ENCODE measurements at regions of chr7 and their contacts with region 1.

Region 1: DNA sequence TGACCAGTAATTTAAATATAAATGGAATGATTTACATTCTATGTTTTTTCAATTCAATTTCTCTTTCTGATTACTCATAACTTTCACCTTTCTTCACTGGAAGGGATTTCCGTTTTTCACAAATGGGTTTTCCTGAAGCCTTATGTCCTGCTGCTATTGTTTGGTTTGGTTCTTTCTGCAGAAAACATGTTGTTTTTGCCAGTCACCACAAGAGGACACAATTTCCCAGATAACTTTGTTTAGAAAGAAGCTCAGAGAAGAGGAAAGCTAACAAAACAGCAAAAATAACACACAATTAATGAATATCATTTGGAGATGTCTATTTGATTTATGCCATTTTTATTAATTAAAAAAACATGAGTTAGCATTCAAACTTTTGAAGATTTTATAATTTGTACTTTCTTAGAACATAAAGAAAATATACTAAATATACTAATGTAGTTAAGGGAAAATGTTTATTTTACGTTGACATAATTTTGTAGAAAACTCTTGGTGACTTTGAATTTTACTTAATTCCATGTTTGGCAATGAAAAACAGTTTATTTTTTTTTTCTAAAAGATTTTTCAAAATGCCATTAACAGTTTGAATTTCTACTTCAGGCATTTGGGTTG is 4.6 kb upstream of the TWIST1 start:
- DNase-seq: no peak
- H3K4me3 ChIP-seq: no peak overlapping the region
- H3K27ac ChIP-seq: no peak overlapping the region
- H3K4me1 ChIP-seq: no peaks in the 10 kb centered on the region
- H3K27me3 ChIP-seq: no peaks in the 10 kb centered on the region
- CTCF ChIP-seq: peak; percentile 85

Region 2: DNA sequence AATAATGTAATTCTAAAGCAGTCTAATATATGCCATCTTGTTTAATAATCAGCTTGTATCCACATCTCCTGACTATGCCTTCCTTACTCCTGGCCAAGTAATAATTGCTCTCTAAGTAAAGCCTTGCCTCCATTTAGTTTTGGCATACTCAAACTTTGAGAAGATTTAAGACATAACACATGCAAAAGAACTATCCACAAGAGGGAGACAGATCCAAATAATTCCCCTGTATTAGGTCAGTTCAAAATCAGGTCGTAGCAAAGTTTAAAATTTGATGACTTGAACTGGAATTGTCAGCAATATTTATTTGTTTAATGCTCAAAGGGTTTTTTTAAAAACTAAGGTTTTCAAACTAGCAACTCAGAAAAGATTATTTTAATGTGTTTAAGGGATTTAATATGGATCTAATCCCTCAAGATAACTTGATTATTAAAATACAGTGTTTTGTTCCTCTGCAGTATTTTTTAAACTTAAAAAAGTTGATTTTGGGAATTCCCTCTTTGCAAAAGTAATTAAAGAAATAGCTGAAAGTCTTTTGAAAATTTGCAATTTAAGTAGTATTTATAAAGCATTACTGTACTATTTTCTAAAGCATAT is 531.2 kb before region 1 on chr7:
- CTCF ChIA-PET with region 1: interaction called, 4 read pairs
- POLR2A ChIA-PET with region 1: no interaction called
- intact Hi-C with region 1: loop called (anchors 10 kb)
- DNase-seq: peak in 1 of 2 experiments; percentile 53
- H3K4me3 ChIP-seq: no peak overlapping the region
- H3K27ac ChIP-seq: no peak overlapping the region
- H3K4me1 ChIP-seq: peaks cover 7% of the 10 kb centered on the region
- H3K27me3 ChIP-seq: no peaks in the 10 kb centered on the region
- CTCF ChIP-seq: peak; percentile 86

Region 3: GRCh38 chr7:18886832-18887231 is 235.3 kb before region 1 on chr7:
- CTCF ChIA-PET with region 1: no interaction called
- POLR2A ChIA-PET with region 1: no interaction called
- intact Hi-C with region 1: no loop called
- DNase-seq: no peak
- H3K4me3 ChIP-seq: no peak overlapping the region
- H3K27ac ChIP-seq: no peak overlapping the region
- H3K4me1 ChIP-seq: no peaks in the 10 kb centered on the region
- H3K27me3 ChIP-seq: no peaks in the 10 kb centered on the region
- CTCF ChIP-seq: no peak

Region 4: GRCh38 chr7:19107356-19108146 is 14.5 kb before region 1 on chr7:
- CTCF ChIA-PET with region 1: no interaction called
- POLR2A ChIA-PET with region 1: no interaction called
- intact Hi-C with region 1: no loop called
- DNase-seq: no peak
- H3K4me3 ChIP-seq: no peak overlapping the region
- H3K27ac ChIP-seq: no peak overlapping the region
- H3K4me1 ChIP-seq: no peaks in the 10 kb centered on the region
- H3K27me3 ChIP-seq: no peaks in the 10 kb centered on the region; the same call in 1 of the 2 replicates
- CTCF ChIP-seq: no peak

Region 5: GRCh38 chr7:19362099-19362498 is 240.0 kb after region 1 on chr7:
- CTCF ChIA-PET with region 1: no interaction called
- POLR2A ChIA-PET with region 1: no interaction called
- intact Hi-C with region 1: no loop called
- DNase-seq: no peak
- H3K4me3 ChIP-seq: no peak overlapping the region
- H3K27ac ChIP-seq: no peak overlapping the region
- H3K4me1 ChIP-seq: no peaks in the 10 kb centered on the region
- H3K27me3 ChIP-seq: no peaks in the 10 kb centered on the region
- CTCF ChIP-seq: no peak

Region 6: DNA sequence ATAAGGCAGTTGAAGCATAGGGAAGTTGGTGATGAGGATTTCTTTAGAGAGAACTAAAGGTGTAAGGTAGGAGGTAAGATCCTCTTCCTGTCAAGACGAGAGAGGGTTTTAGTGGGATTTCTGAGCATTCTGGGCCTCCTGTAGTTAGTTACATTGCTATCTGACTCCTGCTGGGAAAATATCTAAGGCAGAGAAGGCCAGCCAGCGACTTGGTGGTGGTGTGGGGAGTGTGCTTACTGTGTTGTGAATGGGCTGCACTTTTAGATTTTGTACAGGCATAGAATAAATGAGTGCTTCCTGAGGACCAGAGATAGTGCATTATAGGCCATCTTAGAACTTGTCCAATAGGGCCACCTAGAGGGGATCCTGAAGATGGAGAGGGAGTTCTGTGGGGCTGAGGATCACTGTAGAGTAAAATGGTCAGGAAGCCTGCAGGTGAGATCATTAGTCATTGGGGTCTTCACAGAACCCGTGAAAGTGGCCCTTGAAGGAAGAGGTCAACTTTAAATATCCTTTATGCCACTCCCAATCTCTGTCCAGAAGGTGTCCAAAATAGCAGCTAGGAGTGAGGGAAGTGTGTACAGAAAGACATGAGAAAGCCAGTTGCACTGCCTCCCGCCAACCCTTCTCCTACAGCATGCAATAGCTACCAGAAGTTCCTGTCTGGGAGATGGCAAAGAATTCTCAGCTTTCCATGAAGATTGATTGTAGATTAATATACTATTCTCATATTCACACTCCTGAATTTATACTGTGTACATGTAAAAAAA is 320.1 kb after region 1 on chr7:
- CTCF ChIA-PET with region 1: no interaction called
- POLR2A ChIA-PET with region 1: no interaction called
- intact Hi-C with region 1: loop called (anchors 2 kb)
- DNase-seq: peak in 1 of 2 experiments; percentile 18
- H3K4me3 ChIP-seq: no peak overlapping the region
- H3K27ac ChIP-seq: no peak overlapping the region
- H3K4me1 ChIP-seq: no peaks in the 10 kb centered on the region
- H3K27me3 ChIP-seq: no peaks in the 10 kb centered on the region
- CTCF ChIP-seq: peak; percentile 61

Region 7: DNA sequence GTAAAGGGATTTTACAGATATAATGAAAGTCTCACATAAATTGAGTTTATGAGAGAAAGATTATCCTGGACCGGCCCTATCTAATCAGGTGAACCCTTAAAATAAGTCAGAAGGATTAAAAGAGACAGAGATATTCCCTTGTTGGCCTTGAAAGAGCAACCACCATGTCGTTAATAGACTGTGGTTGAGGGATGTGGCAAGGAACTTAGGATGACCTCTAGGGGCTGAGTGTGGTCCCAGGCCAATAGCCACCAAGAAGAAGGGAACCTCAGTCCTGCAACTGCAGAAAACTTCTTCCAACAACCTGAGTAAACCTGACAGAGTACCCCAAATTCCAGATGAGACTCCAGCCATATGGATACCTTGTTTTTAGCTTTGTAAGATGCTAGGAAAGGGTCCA is 465.2 kb after region 1 on chr7:
- CTCF ChIA-PET with region 1: no interaction called
- POLR2A ChIA-PET with region 1: no interaction called
- intact Hi-C with region 1: loop called (anchors 10 kb)
- DNase-seq: no peak
- H3K4me3 ChIP-seq: no peak overlapping the region
- H3K27ac ChIP-seq: no peak overlapping the region
- H3K4me1 ChIP-seq: no peaks in the 10 kb centered on the region
- H3K27me3 ChIP-seq: no peaks in the 10 kb centered on the region
- CTCF ChIP-seq: no peak; the same call in 1 of the 2 replicates

Region 8: DNA sequence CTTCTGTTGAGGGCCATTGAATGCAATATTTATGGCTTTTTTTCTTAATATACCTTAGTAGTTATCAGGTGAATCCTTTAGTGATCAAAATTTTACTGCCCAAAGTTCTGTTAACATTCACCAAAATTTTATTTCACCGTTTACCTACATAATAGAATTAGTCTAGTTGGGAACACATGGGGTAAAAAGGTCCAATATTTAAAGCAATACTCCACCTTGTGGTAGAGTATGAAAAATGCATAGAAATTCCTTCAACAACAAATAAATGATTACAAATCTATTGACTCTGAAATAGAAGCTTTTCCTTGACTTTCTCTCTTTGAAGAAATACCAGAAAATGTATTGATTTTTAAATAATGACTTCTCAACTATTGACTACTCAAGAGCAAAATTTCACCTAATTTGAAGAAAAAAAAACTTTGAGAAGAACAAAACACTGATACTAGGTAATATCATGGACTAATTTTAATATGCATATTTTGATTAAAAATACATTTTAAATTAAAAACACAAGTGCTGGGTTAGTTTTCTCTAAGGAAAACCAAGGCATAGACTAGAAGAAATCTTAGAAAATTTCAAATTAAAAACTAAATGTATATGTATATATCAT is 543.4 kb after region 1 on chr7:
- CTCF ChIA-PET with region 1: no interaction called
- POLR2A ChIA-PET with region 1: no interaction called
- intact Hi-C with region 1: loop called (anchors 1 kb)
- DNase-seq: no peak
- H3K4me3 ChIP-seq: no peak overlapping the region
- H3K27ac ChIP-seq: no peak overlapping the region
- H3K4me1 ChIP-seq: peaks cover 10% of the 10 kb centered on the region; the same call in 1 of the 2 replicates
- H3K27me3 ChIP-seq: no peaks in the 10 kb centered on the region
- CTCF ChIP-seq: peak; percentile 90